ENCODE measurements at regions of chr2 and their contacts with region 1.

Region 1: GRCh38 chr2:189466660-189467059 is 25.4 kb downstream of the WDR75 start:
- DNase-seq: no peak
- H3K4me3 ChIP-seq: no peak overlapping the region
- H3K27ac ChIP-seq: no peak overlapping the region
- H3K4me1 ChIP-seq: no peaks in the 10 kb centered on the region
- H3K27me3 ChIP-seq: no peaks in the 10 kb centered on the region
- CTCF ChIP-seq: peak; percentile 48

Region 2: DNA sequence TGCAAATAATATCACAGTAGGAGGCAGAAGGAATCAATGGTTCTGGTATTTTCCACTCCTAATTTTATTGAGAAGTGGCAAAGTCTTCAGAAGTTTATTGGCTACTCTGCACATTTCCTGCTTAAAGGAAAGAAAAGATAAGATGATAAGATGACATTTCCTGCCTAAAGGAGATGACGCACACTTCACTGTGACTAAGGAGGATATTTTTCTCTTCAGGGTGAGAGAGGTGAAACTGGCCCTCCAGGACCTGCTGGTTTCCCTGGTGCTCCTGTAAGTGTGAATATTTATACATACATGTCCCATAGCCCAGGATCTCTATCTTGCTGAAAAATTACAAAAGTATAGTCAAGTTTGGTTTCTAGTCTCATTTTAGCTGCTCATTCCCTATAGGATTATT is 464.6 kb before region 1 on chr2:
- intact Hi-C with region 1: no loop called
- DNase-seq: no peak
- H3K4me3 ChIP-seq: no peak overlapping the region
- H3K27ac ChIP-seq: no peak overlapping the region
- H3K4me1 ChIP-seq: no peaks in the 10 kb centered on the region
- H3K27me3 ChIP-seq: no peaks in the 10 kb centered on the region
- CTCF ChIP-seq: no peak

Region 3: GRCh38 chr2:189569295-189569910 is 102.7 kb after region 1 on chr2:
- intact Hi-C with region 1: loop called (anchors 10 kb)
- DNase-seq: no peak
- H3K4me3 ChIP-seq: no peak overlapping the region
- H3K27ac ChIP-seq: no peak overlapping the region
- H3K4me1 ChIP-seq: no peaks in the 10 kb centered on the region
- H3K27me3 ChIP-seq: no peaks in the 10 kb centered on the region
- CTCF ChIP-seq: no peak

Region 4: GRCh38 chr2:189628817-189629530 is 162.3 kb after region 1 on chr2:
- intact Hi-C with region 1: loop called (anchors 10 kb)
- DNase-seq: no peak
- H3K4me3 ChIP-seq: no peak overlapping the region
- H3K27ac ChIP-seq: no peak overlapping the region
- H3K4me1 ChIP-seq: no peaks in the 10 kb centered on the region
- H3K27me3 ChIP-seq: no peaks in the 10 kb centered on the region
- CTCF ChIP-seq: no peak

Region 5: GRCh38 chr2:190170673-190171072 is 704.0 kb after region 1 on chr2:
- intact Hi-C with region 1: no loop called
- DNase-seq: no peak
- H3K4me3 ChIP-seq: no peak overlapping the region
- H3K27ac ChIP-seq: peak overlapping the region; percentile 56
- H3K4me1 ChIP-seq: no peaks in the 10 kb centered on the region
- H3K27me3 ChIP-seq: no peaks in the 10 kb centered on the region
- CTCF ChIP-seq: no peak